ENCODE measurements at regions of chr4 and their contacts with region 1.

Region 1: GRCh38 chr4:48706736-48707135 is 73.3 kb downstream of the FRYL start:
- DNase-seq: no peak
- ATAC-seq: no peak
- H3K4me3 ChIP-seq: no peak overlapping the region
- H3K4me3 Mint-ChIP-seq: no peak overlapping the region
- H3K27ac ChIP-seq: no peak overlapping the region
- H3K27ac Mint-ChIP-seq: no peak overlapping the region
- H3K4me1 ChIP-seq: no peaks in the 10 kb centered on the region
- H3K4me1 Mint-ChIP-seq: peaks cover 41% of the 10 kb centered on the region
- H3K27me3 ChIP-seq: no peaks in the 10 kb centered on the region
- H3K27me3 Mint-ChIP-seq: no peaks in the 10 kb centered on the region
- CTCF ChIP-seq: no peak

Region 2: GRCh38 chr4:47451657-47452056 is 1255.1 kb before region 1 on chr4:
- CTCF ChIA-PET with region 1: no interaction called
- POLR2A ChIA-PET with region 1: no interaction called
- intact Hi-C with region 1: loop called in 1 of 2 experiments (anchors 5 kb)
- DNase-seq: no peak
- ATAC-seq: no peak
- H3K4me3 ChIP-seq: no peak overlapping the region
- H3K4me3 Mint-ChIP-seq: no peak overlapping the region
- H3K27ac ChIP-seq: no peak overlapping the region
- H3K27ac Mint-ChIP-seq: no peak overlapping the region
- H3K4me1 ChIP-seq: no peaks in the 10 kb centered on the region
- H3K4me1 Mint-ChIP-seq: peaks cover 17% of the 10 kb centered on the region
- H3K27me3 ChIP-seq: no peaks in the 10 kb centered on the region
- H3K27me3 Mint-ChIP-seq: no peaks in the 10 kb centered on the region
- CTCF ChIP-seq: no peak